Colonic mucosa (tissue), 4 donors: ENCODE measurements at regions of chr7 and their contacts with region 1.

Region 1: DNA sequence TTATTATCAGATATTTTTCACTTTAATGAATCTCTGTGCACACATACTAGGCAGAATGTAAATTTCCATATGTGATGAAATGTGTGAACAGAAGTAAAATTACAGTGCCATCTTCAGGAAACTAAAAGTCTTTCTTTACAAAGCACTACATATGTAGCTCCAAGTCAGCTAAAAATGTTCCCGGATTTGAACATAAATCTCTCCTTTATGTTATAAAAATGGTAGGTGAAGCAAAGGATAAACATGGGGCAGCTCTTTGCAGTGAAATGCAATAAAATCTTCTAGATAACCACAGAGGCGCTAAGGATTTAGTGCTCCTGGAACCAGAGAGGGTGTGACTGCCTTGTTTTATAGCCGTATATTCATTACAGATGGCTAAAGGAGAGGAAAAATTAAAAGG is 104.9 kb upstream of the C7orf33 start:
- DNase-seq: peak; percentile 33
- H3K4me3 ChIP-seq: no peak overlapping the region
- H3K27ac ChIP-seq: peak overlapping the region; percentile 13
- H3K4me1 ChIP-seq: no peaks in the 10 kb centered on the region
- H3K27me3 ChIP-seq: no peaks in the 10 kb centered on the region
- CTCF ChIP-seq: no peak

Region 2: GRCh38 chr7:148286150-148286549 is 199.5 kb before region 1 on chr7:
- intact Hi-C with region 1: loop called (anchors 10 kb)
- DNase-seq: no peak
- H3K4me3 ChIP-seq: no peak overlapping the region
- H3K27ac ChIP-seq: no peak overlapping the region
- H3K4me1 ChIP-seq: no peaks in the 10 kb centered on the region
- H3K27me3 ChIP-seq: no peaks in the 10 kb centered on the region
- CTCF ChIP-seq: peak; percentile 42